IMR-90 (cell line): ENCODE measurements at regions of chr5 and their contacts with region 1.

Region 1: DNA sequence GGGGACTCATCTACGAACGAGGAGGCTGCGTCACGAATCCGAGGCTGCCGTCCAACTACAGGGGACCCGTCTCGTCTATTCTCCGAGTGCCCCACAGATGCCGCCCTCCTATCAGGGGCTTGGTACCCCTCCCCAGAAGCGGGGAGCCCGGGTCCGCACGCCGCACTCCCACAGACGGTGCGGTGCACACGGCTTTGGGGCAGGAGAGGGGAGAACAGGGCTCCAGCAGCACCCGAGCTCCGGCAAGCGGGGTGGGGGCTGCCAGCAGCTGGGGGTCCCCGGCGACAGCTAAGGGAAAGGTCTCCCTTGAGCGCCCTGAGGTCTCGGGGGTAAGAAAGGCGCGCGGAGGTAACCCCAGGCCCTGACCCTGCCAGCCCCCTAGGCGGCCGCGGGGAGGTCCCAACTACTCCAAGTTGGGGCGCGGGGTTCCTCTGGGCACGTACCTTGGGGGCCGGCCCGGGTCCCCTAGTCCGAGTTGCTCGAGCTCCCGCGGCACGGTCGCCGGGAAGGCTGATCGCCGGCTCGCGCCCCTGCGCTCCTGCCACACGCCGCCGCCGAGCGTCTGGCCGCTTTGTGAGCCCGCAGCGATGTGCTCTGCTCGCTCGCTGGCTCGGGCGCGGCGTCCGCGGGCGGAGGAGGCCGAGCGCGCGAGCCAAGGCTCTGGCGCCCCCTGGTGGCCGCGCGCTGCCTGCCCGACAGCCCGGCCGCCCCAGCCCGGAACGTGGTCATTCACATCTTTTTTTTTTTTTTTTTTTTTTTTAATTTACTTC is at the start of gene SPOCK1:
- DNase-seq: peak; percentile 63
- ATAC-seq: peak; percentile 98
- H3K4me3 ChIP-seq: peak within 1 kb of the TSS; percentile 52
- H3K27ac ChIP-seq: no peak within 1 kb of the TSS
- H3K4me1 ChIP-seq: no peaks in the 10 kb centered on the region
- H3K27me3 ChIP-seq: peaks cover 15% of the 10 kb centered on the region; the same call in 1 of the 2 replicates
- CTCF ChIP-seq: peak; percentile 96
- POLR2A ChIP-seq: no peak; the same call in 1 of the 2 replicates
- RAD21 ChIP-seq: peak; percentile 94
- total RNA-seq, gene SPOCK1: 5.0 and 8.1 TPM in 2 replicates

Region 2: DNA sequence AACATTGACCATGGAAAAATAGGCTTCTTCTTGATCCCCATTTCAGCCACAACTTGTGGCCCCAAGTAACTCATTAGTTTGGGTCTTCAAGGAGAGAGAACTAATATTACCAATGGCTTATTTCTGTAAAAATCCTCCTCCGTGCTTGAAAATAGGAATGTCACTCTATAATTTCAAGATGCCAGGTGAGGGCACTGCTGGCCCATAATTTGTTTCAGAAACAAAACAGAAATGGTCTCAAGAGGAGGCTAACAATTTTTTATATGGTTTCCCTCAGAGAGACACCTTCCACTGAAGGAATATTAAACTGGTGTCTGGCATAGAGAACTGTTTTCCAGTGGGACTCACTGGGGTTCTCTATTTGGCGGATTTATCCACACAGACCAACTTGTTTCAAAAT is 696.5 kb before region 1 on chr5:
- CTCF ChIA-PET with region 1: no interaction called
- POLR2A ChIA-PET with region 1: no interaction called
- dilution Hi-C with region 1: no loop called
- in situ Hi-C with region 1: no loop called
- intact Hi-C with region 1: loop called (anchors 1 kb)
- DNase-seq: peak; percentile 5
- ATAC-seq: no peak
- H3K4me3 ChIP-seq: no peak overlapping the region
- H3K27ac ChIP-seq: no peak overlapping the region
- H3K4me1 ChIP-seq: no peaks in the 10 kb centered on the region
- H3K27me3 ChIP-seq: no peaks in the 10 kb centered on the region
- CTCF ChIP-seq: peak; percentile 41
- POLR2A ChIP-seq: no peak
- RAD21 ChIP-seq: peak; percentile 54

Region 3: DNA sequence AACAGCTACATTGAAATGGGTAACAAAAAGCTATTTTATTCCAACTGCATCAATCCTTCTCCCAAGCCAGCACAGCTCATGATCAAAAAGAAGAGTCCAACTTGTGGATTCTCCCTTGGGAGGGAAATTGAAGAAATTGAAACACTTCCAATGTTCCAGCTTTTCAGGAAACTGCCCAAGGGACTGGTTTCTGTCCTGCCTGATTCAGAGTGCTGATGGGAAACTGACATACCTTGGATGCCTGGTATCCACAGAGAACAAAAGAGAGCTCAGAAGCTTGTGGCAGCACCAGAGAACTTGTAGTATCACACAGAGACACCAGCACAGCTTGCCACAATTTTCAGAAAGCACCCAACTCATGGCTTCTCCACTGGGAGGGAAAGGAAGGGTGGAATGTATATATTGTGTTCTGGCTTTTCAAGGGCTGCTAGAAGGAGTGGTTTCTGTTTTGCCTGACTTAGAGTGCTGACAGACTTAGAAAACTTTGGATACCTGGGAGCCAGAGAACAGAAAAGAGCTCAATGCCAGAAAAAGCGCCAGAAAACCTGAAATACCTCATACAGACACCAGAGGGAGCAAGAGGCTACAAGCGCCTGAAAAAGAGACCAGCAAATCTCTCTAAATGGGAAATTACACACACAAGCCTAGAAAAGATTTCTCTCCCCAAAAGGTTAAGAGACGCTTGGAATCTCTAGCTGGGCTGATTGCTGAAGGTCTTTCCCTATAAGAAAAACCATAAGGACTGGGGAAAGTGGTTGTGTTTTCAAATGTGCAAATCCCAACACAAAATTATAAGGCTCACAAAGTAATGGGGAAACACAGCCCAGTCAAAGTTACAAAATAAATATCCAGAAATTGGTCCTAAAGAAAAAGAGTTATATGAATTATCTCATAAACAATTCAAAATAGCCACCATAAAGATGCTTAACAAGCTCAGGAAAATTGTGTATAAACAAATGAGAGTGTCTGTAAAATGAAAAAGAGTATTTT is 178.6 kb before region 1 on chr5:
- CTCF ChIA-PET with region 1: interaction called, 37 read pairs
- POLR2A ChIA-PET with region 1: no interaction called
- dilution Hi-C with region 1: no loop called
- in situ Hi-C with region 1: no loop called
- intact Hi-C with region 1: loop called (anchors 1 kb)
- DNase-seq: peak; percentile 51
- ATAC-seq: peak; percentile 73; the same call in 1 of the 2 replicates
- H3K4me3 ChIP-seq: no peak overlapping the region
- H3K27ac ChIP-seq: no peak overlapping the region
- H3K4me1 ChIP-seq: no peaks in the 10 kb centered on the region
- H3K27me3 ChIP-seq: peaks cover 8% of the 10 kb centered on the region
- CTCF ChIP-seq: peak; percentile 82
- POLR2A ChIP-seq: no peak
- RAD21 ChIP-seq: peak; percentile 76

Region 4: DNA sequence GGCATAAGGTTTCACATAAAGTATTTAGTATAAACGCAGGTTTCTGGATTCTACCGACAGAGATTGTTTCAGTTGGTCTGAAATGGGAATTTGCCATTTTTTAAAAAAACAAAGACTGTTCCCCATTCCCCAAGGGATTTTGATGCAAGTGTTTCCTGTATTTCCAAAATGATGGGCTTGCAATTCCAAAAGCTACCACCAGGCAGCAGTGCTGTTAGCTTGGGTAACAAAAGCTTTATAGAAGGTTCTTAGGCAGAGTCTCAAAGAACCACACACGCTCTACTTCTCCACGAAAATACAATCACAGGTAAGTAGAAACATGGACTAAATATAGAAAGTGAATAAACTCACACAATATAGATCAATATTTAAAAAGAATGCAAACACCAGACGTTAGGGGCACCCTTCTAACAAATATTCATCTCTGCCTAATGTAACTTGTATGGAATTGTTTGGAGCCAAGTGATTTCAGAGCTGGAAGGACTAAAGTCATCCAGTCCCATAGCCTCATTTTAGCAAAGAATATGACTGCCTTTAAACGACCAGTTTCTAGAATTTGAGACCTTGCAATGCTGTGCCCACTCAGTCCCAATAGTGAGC is 154.1 kb before region 1 on chr5:
- CTCF ChIA-PET with region 1: interaction called, 29 read pairs
- POLR2A ChIA-PET with region 1: no interaction called
- dilution Hi-C with region 1: no loop called
- in situ Hi-C with region 1: loop called (anchors 5 kb)
- intact Hi-C with region 1: loop called (anchors 2 kb)
- DNase-seq: peak; percentile 53
- ATAC-seq: peak; percentile 59; the same call in 1 of the 2 replicates
- H3K4me3 ChIP-seq: no peak overlapping the region
- H3K27ac ChIP-seq: no peak overlapping the region
- H3K4me1 ChIP-seq: no peaks in the 10 kb centered on the region
- H3K27me3 ChIP-seq: 0 out of 2 replicates have a peak, but pooled peaks cover 2% of the 10 kb centered on the region
- CTCF ChIP-seq: peak; percentile 86
- POLR2A ChIP-seq: no peak
- RAD21 ChIP-seq: peak; percentile 73

Region 5: GRCh38 chr5:137754126-137754960 is 255.4 kb after region 1 on chr5 and contains the start of gene HNRNPA0:
- CTCF ChIA-PET with region 1: no interaction called
- POLR2A ChIA-PET with region 1: no interaction called
- dilution Hi-C with region 1: no loop called
- in situ Hi-C with region 1: no loop called
- intact Hi-C with region 1: no loop called
- DNase-seq: peak; percentile 97
- ATAC-seq: peak; percentile 96
- H3K4me3 ChIP-seq: peak within 1 kb of the TSS; percentile 61
- H3K27ac ChIP-seq: peak within 1 kb of the TSS; percentile 92
- H3K4me1 ChIP-seq: no peaks in the 10 kb centered on the region; the same call in 1 of the 2 replicates
- H3K27me3 ChIP-seq: no peaks in the 10 kb centered on the region
- CTCF ChIP-seq: 0 out of 2 replicates have a peak, but pooled peaks have one; percentile 1
- POLR2A ChIP-seq: peak; percentile 98
- RAD21 ChIP-seq: no peak
- total RNA-seq, gene HNRNPA0: 5.2 and 8.9 TPM in 2 replicates